Heart left ventricle (tissue), 16 donors: ENCODE measurements at regions of chr5 and their contacts with region 1.

Region 1: DNA sequence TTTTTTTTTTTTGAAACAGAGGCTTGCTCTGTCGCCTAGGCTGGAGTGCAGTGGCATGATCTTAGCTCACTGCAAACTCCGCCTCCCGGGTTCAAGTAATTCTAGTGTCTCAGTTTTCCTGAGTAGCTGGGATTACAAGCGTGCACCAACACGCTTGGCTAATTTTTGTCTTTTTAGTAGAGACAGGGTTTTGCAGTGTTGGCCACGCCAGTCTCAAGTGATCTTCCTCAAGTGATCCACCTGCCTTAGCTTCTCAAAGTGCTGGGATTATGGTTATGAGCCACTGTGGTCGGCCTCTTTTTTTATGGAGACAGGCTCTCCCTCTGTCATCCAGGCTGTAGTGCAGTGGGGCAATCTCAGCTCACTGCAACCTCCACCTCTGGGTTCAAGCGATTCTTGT is 82.9 kb downstream of the RAB24 start:
- DNase-seq: no peak
- ATAC-seq: no peak
- H3K4me3 ChIP-seq: no peak overlapping the region
- H3K27ac ChIP-seq: no peak overlapping the region
- H3K4me1 ChIP-seq: peaks cover 0 to 6% (median 0%) of the 10 kb centered on the region in 12 donors
- H3K27me3 ChIP-seq: no peaks in the 10 kb centered on the region
- CTCF ChIP-seq: no peak
- POLR2A ChIP-seq: no peak

Region 2: GRCh38 chr5:177035976-177036375 is 184.6 kb before region 1 on chr5:
- intact Hi-C with region 1: no loop called
- DNase-seq: no peak
- ATAC-seq: no peak
- H3K4me3 ChIP-seq: no peak overlapping the region
- H3K27ac ChIP-seq: no peak overlapping the region
- H3K4me1 ChIP-seq: peaks cover 0 to 10% (median under 1%) of the 10 kb centered on the region in 12 donors
- H3K27me3 ChIP-seq: no peaks in the 10 kb centered on the region
- CTCF ChIP-seq: no peak
- POLR2A ChIP-seq: no peak

Region 3: GRCh38 chr5:177113566-177114424 is 106.8 kb before region 1 on chr5:
- intact Hi-C with region 1: no loop called
- DNase-seq: peak; percentile 63 to 84 (median 73)
- ATAC-seq: peak in 3 of 4 donors; percentile 60 to 68 (median 63)
- H3K4me3 ChIP-seq: peak overlapping the region in 6 of 12 donors; percentile 24 to 37 (median 29)
- H3K27ac ChIP-seq: peak overlapping the region in 9 of 12 donors; percentile 12 to 71 (median 54)
- H3K4me1 ChIP-seq: peaks cover 0 to 28% (median 15%) of the 10 kb centered on the region in 12 donors
- H3K27me3 ChIP-seq: no peaks in the 10 kb centered on the region
- CTCF ChIP-seq: peak; percentile 95 to 100 (median 99)
- POLR2A ChIP-seq: no peak

Region 4: DNA sequence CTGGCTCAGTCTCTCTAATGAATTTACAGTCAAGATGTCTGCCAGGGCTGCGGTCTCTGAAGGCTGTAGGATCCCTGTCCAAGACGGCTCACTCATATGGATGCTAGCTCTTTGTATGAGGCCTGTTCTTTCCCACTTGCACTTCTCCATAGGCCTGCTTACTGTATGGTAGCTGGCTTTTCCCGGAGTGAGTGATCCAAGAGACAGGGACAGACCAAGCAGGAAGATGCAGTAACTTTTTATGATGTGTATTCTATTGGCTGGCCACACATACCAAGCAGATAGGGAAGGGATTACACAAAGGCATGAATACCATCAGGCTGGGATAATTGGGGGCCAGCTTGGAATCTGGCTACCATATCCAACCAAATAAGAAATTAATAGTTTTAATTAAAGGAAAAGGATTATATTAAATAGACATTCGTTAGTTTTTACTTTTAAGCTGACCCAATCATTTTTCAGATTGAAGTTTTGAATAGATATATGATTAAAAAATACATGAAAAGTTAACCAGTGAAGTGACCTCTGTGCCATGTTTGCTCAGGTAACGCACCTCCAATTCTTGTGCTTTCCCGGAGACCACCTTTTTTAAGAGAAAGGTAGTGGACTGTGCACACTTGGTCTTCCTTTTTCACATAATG is 66.5 kb before region 1 on chr5:
- intact Hi-C with region 1: loop called in 1 of 10 experiments (anchors 5 kb)
- DNase-seq: no peak
- ATAC-seq: no peak
- H3K4me3 ChIP-seq: no peak overlapping the region
- H3K27ac ChIP-seq: no peak overlapping the region
- H3K4me1 ChIP-seq: peaks cover 0 to 20% (median 8%) of the 10 kb centered on the region in 12 donors
- H3K27me3 ChIP-seq: no peaks in the 10 kb centered on the region
- CTCF ChIP-seq: no peak
- POLR2A ChIP-seq: no peak